ENCODE measurements at regions of chr10 and their contacts with region 1.

Region 1: DNA sequence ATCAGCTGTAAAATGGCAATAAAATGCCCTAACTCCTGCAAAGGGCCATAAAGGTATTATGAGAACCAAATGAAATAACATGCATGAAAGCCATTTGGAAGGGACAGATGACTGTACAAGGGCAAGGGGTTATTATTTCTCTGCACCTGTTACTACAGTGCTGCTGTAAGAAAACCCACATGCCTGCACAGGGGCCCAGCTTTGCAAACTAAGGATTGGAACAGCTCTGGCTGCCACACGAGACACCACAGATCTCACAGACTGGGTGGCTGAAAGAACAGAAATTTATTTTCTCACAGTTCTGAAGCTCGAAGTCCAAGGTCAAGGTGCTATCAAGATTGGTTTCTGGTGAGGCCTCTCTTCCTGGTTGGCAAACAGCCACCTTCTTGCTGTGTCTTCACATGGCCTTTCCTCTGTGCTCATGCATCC is 409.0 kb upstream of the NRP1 start:
- DNase-seq: peak; percentile 19
- ATAC-seq: peak; percentile 81
- H3K4me3 ChIP-seq: no peak overlapping the region
- H3K27ac ChIP-seq: no peak overlapping the region
- H3K4me1 ChIP-seq: no peaks in the 10 kb centered on the region
- H3K27me3 ChIP-seq: no peaks in the 10 kb centered on the region
- CTCF ChIP-seq: no peak
- EP300 ChIP-seq: no peak
- POLR2A ChIP-seq: no peak
- RAD21 ChIP-seq: no peak

Region 2: DNA sequence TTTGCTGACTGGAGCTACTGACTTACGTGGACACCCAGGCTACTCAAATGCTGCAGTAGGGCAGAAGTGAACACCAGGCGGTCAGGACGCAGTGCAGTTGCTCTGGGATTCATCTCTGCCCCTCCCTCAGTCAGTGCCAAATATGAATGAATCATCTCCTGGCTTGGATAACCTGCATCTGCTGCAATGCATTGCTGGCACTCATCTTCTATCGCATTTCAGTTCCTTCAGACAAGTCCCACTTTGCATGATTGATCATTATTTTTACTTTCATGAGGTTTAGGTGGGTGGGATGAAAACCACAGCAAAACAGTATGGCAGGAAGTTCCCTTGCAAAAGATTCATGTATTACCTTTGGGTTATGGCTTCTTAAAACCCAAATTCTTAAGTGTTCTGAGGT is 184.3 kb before region 1 on chr10:
- CTCF ChIA-PET with region 1: interaction called, 4 read pairs
- POLR2A ChIA-PET with region 1: no interaction called
- RAD21 ChIA-PET with region 1: interaction called, 9 read pairs
- SMC1A ChIA-PET with region 1: interaction called, 10 read pairs
- in situ Hi-C with region 1: no loop called
- intact Hi-C with region 1: no loop called
- DNase-seq: no peak
- ATAC-seq: peak; percentile 79
- H3K4me3 ChIP-seq: no peak overlapping the region
- H3K27ac ChIP-seq: no peak overlapping the region
- H3K4me1 ChIP-seq: no peaks in the 10 kb centered on the region
- H3K27me3 ChIP-seq: no peaks in the 10 kb centered on the region
- CTCF ChIP-seq: no peak
- EP300 ChIP-seq: no peak; a peak in 1 of 4 replicates
- POLR2A ChIP-seq: no peak
- RAD21 ChIP-seq: no peak

Region 3: DNA sequence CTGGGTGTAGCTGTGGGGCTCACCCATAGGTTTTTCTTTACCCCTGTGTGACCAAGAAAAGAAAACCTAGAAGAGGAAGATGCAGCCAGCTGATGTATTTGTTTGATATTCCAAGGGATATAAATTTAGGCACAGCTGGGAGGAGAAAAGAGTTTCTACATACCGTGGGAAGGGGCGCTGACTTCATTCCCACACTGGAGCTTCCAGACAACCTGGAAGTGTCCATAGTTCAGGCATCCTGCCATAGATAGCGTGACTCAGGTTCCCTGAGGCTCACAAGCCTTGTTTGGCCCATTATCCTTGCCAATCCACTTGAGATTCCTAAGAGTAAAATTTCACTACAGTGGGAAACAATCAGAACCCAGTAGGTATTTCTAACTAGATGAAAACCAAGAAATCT is 37.3 kb before region 1 on chr10:
- CTCF ChIA-PET with region 1: interaction called, 3 read pairs
- POLR2A ChIA-PET with region 1: no interaction called
- RAD21 ChIA-PET with region 1: interaction called, 11 read pairs
- SMC1A ChIA-PET with region 1: interaction called, 7 read pairs
- in situ Hi-C with region 1: no loop called
- intact Hi-C with region 1: no loop called
- DNase-seq: no peak
- ATAC-seq: no peak
- H3K4me3 ChIP-seq: no peak overlapping the region
- H3K27ac ChIP-seq: no peak overlapping the region
- H3K4me1 ChIP-seq: no peaks in the 10 kb centered on the region
- H3K27me3 ChIP-seq: no peaks in the 10 kb centered on the region
- CTCF ChIP-seq: no peak
- EP300 ChIP-seq: no peak
- POLR2A ChIP-seq: no peak
- RAD21 ChIP-seq: no peak

Region 4: DNA sequence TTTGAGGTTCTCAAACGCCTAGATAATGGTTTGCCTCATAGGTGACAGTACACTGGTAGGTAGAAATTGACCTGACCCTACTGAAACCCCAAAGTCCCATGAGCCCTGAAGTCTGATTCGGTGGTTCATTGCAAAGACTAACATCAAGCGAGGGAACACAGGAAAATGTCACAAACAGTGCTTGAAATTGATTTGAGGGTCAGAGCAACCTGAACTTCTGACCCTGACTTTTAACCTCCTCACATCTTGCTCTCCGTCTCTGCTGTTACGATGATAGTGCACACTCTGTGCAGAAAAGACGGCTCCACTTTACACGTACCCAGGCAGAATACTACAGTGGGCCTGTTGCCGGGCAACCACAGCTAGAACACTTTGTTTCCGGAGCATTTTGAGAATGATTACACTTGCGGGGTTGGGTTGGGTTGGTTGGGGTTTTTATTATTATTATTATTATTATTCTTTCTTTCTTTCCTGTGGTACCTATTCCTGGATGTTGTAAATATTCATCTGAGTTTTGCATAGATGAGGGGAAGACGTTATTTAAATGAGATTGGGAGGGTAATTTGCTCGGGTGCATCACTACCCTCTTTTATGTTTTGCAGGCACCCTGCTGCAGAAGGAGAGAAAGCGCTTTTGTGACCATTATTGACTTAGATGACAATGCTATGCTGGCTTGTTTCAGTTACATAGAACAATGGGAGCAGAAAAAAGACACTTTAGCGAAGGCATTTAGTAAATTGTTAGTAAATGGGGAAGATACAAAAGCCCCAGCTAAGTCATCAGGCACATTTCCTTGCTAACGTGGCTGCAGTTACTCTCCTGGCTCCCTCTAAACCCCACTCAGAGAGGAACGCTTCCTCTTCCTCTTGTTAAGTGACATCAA is 29.2 kb after region 1 on chr10:
- CTCF ChIA-PET with region 1: interaction called, 4 read pairs
- POLR2A ChIA-PET with region 1: interaction called, 7 read pairs
- RAD21 ChIA-PET with region 1: interaction called, 69 read pairs
- SMC1A ChIA-PET with region 1: interaction called, 84 read pairs
- in situ Hi-C with region 1: no loop called
- intact Hi-C with region 1: no loop called
- DNase-seq: no peak
- ATAC-seq: peak; percentile 77
- H3K4me3 ChIP-seq: no peak overlapping the region
- H3K27ac ChIP-seq: no peak overlapping the region
- H3K4me1 ChIP-seq: no peaks in the 10 kb centered on the region
- H3K27me3 ChIP-seq: no peaks in the 10 kb centered on the region
- CTCF ChIP-seq: no peak
- EP300 ChIP-seq: no peak
- POLR2A ChIP-seq: no peak
- RAD21 ChIP-seq: no peak

Region 5: DNA sequence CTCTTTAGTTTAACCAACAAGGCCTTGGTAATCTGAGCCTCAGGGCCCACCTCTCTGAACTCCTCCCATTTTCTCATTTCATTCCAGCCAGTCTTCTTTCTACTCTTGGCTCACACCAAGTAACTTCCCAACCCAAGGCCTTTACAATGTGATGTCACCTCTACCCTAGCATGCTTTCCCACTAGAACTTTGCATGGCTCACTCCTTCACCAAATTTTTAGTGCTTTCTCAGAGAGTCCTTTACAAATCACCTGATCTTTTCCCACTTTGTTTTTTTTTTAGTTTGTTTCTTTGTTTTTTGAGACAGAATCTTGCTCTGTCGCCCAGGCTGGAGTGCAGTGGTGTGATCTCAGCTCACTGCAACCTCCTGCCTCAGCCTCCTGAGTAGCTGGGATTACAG is 121.5 kb after region 1 on chr10:
- CTCF ChIA-PET with region 1: no interaction called
- POLR2A ChIA-PET with region 1: no interaction called
- RAD21 ChIA-PET with region 1: no interaction called
- SMC1A ChIA-PET with region 1: no interaction called
- in situ Hi-C with region 1: no loop called
- intact Hi-C with region 1: no loop called
- DNase-seq: no peak
- ATAC-seq: no peak
- H3K4me3 ChIP-seq: no peak overlapping the region
- H3K27ac ChIP-seq: no peak overlapping the region
- H3K4me1 ChIP-seq: no peaks in the 10 kb centered on the region
- H3K27me3 ChIP-seq: no peaks in the 10 kb centered on the region
- CTCF ChIP-seq: no peak
- EP300 ChIP-seq: no peak
- POLR2A ChIP-seq: no peak
- RAD21 ChIP-seq: no peak

Region 6: GRCh38 chr10:34024693-34025425 is 281.4 kb after region 1 on chr10:
- CTCF ChIA-PET with region 1: no interaction called
- POLR2A ChIA-PET with region 1: no interaction called
- RAD21 ChIA-PET with region 1: no interaction called
- SMC1A ChIA-PET with region 1: no interaction called
- in situ Hi-C with region 1: no loop called
- intact Hi-C with region 1: no loop called
- DNase-seq: no peak
- ATAC-seq: no peak
- H3K4me3 ChIP-seq: no peak overlapping the region
- H3K27ac ChIP-seq: no peak overlapping the region
- H3K4me1 ChIP-seq: no peaks in the 10 kb centered on the region
- H3K27me3 ChIP-seq: no peaks in the 10 kb centered on the region
- CTCF ChIP-seq: no peak
- EP300 ChIP-seq: no peak
- POLR2A ChIP-seq: no peak
- RAD21 ChIP-seq: no peak

Region 7: GRCh38 chr10:34139559-34139958 is 396.1 kb after region 1 on chr10:
- CTCF ChIA-PET with region 1: no interaction called
- POLR2A ChIA-PET with region 1: no interaction called
- RAD21 ChIA-PET with region 1: interaction called, 4 read pairs
- SMC1A ChIA-PET with region 1: interaction called, 11 read pairs
- in situ Hi-C with region 1: no loop called
- intact Hi-C with region 1: no loop called
- DNase-seq: no peak
- ATAC-seq: peak; percentile 34
- H3K4me3 ChIP-seq: no peak overlapping the region
- H3K27ac ChIP-seq: no peak overlapping the region
- H3K4me1 ChIP-seq: no peaks in the 10 kb centered on the region
- H3K27me3 ChIP-seq: no peaks in the 10 kb centered on the region
- CTCF ChIP-seq: no peak
- EP300 ChIP-seq: no peak
- POLR2A ChIP-seq: no peak
- RAD21 ChIP-seq: no peak

Measured in GM12878 (cell line).